ENCODE measurements at regions of chr10 and their contacts with region 1.

Region 1: DNA sequence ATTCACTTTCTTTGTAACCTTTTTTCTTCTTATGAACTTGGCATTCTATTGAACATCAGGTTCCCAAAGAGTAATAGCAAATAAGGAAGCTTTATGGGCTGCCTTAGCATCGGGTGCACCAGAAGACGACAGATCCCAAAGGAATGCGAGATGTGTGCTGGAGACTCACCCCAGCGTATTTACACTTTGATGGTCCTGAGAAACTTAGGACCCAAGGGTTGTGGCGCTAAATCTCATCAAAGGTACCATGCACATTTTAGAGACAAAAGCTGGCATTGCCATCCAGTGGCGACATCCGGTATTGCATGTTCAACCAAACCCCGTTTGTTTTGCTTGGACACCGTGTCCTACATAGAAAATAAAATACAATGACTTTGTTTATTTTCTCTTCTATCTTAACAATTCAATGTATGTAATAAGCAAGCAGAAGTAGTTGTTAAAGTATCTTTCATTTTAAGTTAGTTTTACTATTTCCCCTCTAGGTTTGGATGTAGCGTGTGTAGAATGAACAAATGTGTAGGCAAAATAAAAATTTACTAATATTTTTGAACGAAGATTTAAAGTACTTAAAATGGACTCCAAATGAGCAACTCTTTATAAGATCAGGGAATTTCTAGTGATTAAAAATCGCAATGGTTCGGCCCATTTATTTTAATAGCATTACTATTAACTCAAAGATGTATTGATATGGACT is 1154.8 kb downstream of the GATA3 start:
- DNase-seq: peak; percentile 71
- H3K4me3 Mint-ChIP-seq: no peak overlapping the region
- H3K27ac Mint-ChIP-seq: peak overlapping the region; percentile 42
- H3K4me1 Mint-ChIP-seq: peaks cover 8% of the 10 kb centered on the region
- H3K27me3 Mint-ChIP-seq: no peaks in the 10 kb centered on the region
- CTCF ChIP-seq: peak; percentile 88

Region 2: GRCh38 chr10:9038129-9038656 is 171.1 kb before region 1 on chr10:
- CTCF ChIA-PET with region 1: no interaction called
- POLR2A ChIA-PET with region 1: no interaction called
- intact Hi-C with region 1: loop called (anchors 10 kb)
- DNase-seq: peak; percentile 61
- H3K4me3 Mint-ChIP-seq: no peak overlapping the region
- H3K27ac Mint-ChIP-seq: no peak overlapping the region
- H3K4me1 Mint-ChIP-seq: peaks cover 5% of the 10 kb centered on the region
- H3K27me3 Mint-ChIP-seq: no peaks in the 10 kb centered on the region
- CTCF ChIP-seq: no peak

Region 3: GRCh38 chr10:9302120-9302746 is 93.0 kb after region 1 on chr10:
- CTCF ChIA-PET with region 1: interaction called, 3 read pairs
- POLR2A ChIA-PET with region 1: no interaction called
- intact Hi-C with region 1: loop called (anchors 1 kb)
- DNase-seq: peak; percentile 74
- H3K4me3 Mint-ChIP-seq: no peak overlapping the region
- H3K27ac Mint-ChIP-seq: no peak overlapping the region
- H3K4me1 Mint-ChIP-seq: no peaks in the 10 kb centered on the region
- H3K27me3 Mint-ChIP-seq: no peaks in the 10 kb centered on the region
- CTCF ChIP-seq: peak; percentile 38

Measured in MCF 10A (cell line).